ENCODE measurements at regions of chr17 and their contacts with region 1.

Region 1: GRCh38 chr17:19004421-19005136 is at the start of gene FAM83G:
- DNase-seq: peak; percentile 67 to 94 (median 88)
- ATAC-seq: peak; percentile 73
- H3K4me3 ChIP-seq: peak within 1 kb of the TSS; percentile 67
- H3K4me3 Mint-ChIP-seq: peak within 1 kb of the TSS; percentile 97
- H3K27ac ChIP-seq: peak within 1 kb of the TSS; percentile 79 to 85
- H3K27ac Mint-ChIP-seq: peak within 1 kb of the TSS; percentile 83
- H3K4me1 ChIP-seq: peaks cover 55% of the 10 kb centered on the region
- H3K4me1 Mint-ChIP-seq: peaks cover 30% of the 10 kb centered on the region
- H3K27me3 ChIP-seq: no peaks in the 10 kb centered on the region
- H3K27me3 Mint-ChIP-seq: no peaks in the 10 kb centered on the region
- CTCF ChIP-seq: no peak
- total RNA-seq, gene FAM83G: 2.9 to 3.0 TPM

Region 2: GRCh38 chr17:18855831-18856569 is 148.6 kb before region 1 on chr17:
- CTCF ChIA-PET with region 1: no interaction called
- POLR2A ChIA-PET with region 1: interaction called, 6 read pairs
- intact Hi-C with region 1: loop called in 1 of 2 experiments (anchors 5 kb)
- DNase-seq: peak; percentile 74 to 94 (median 82)
- ATAC-seq: peak; percentile 88
- H3K4me3 ChIP-seq: peak overlapping the region; percentile 80
- H3K4me3 Mint-ChIP-seq: peak overlapping the region; percentile 95
- H3K27ac ChIP-seq: peak overlapping the region; percentile 41 to 53
- H3K27ac Mint-ChIP-seq: peak overlapping the region; percentile 89
- H3K4me1 ChIP-seq: peaks cover 52% of the 10 kb centered on the region
- H3K4me1 Mint-ChIP-seq: peaks cover 49% of the 10 kb centered on the region
- H3K27me3 ChIP-seq: no peaks in the 10 kb centered on the region
- H3K27me3 Mint-ChIP-seq: no peaks in the 10 kb centered on the region
- CTCF ChIP-seq: no peak

Region 3: GRCh38 chr17:18904482-18904881 is 100.1 kb before region 1 on chr17:
- CTCF ChIA-PET with region 1: no interaction called
- POLR2A ChIA-PET with region 1: interaction called, 5 read pairs
- intact Hi-C with region 1: loop called in 1 of 2 experiments (anchors 10 kb)
- DNase-seq: no peak
- ATAC-seq: no peak
- H3K4me3 ChIP-seq: no peak overlapping the region
- H3K4me3 Mint-ChIP-seq: no peak overlapping the region
- H3K27ac ChIP-seq: no peak overlapping the region
- H3K27ac Mint-ChIP-seq: no peak overlapping the region
- H3K4me1 ChIP-seq: peaks cover 45% of the 10 kb centered on the region
- H3K4me1 Mint-ChIP-seq: peaks cover 46% of the 10 kb centered on the region
- H3K27me3 ChIP-seq: no peaks in the 10 kb centered on the region
- H3K27me3 Mint-ChIP-seq: no peaks in the 10 kb centered on the region
- CTCF ChIP-seq: no peak

Region 4: GRCh38 chr17:18933102-18934058 is 71.2 kb before region 1 on chr17:
- CTCF ChIA-PET with region 1: no interaction called
- POLR2A ChIA-PET with region 1: no interaction called
- intact Hi-C with region 1: no loop called
- DNase-seq: peak in 2 of 14 experiments; percentile 15 to 38
- ATAC-seq: no peak
- H3K4me3 ChIP-seq: no peak overlapping the region
- H3K4me3 Mint-ChIP-seq: no peak overlapping the region
- H3K27ac ChIP-seq: no peak overlapping the region
- H3K27ac Mint-ChIP-seq: peak overlapping the region; percentile 57
- H3K4me1 ChIP-seq: peaks cover 17% of the 10 kb centered on the region
- H3K4me1 Mint-ChIP-seq: peaks cover 23% of the 10 kb centered on the region
- H3K27me3 ChIP-seq: no peaks in the 10 kb centered on the region
- H3K27me3 Mint-ChIP-seq: no peaks in the 10 kb centered on the region
- CTCF ChIP-seq: no peak

Region 5: GRCh38 chr17:18960803-18961511 is 43.6 kb before region 1 on chr17:
- CTCF ChIA-PET with region 1: interaction called, 6 read pairs
- POLR2A ChIA-PET with region 1: interaction called, 6 read pairs
- intact Hi-C with region 1: loop called in 1 of 2 experiments (anchors 5 kb)
- DNase-seq: peak; percentile 39 to 89 (median 70)
- ATAC-seq: peak; percentile 73
- H3K4me3 ChIP-seq: no peak overlapping the region
- H3K4me3 Mint-ChIP-seq: no peak overlapping the region
- H3K27ac ChIP-seq: no peak overlapping the region
- H3K27ac Mint-ChIP-seq: no peak overlapping the region
- H3K4me1 ChIP-seq: peaks cover 29% of the 10 kb centered on the region
- H3K4me1 Mint-ChIP-seq: peaks cover 23% of the 10 kb centered on the region
- H3K27me3 ChIP-seq: no peaks in the 10 kb centered on the region
- H3K27me3 Mint-ChIP-seq: no peaks in the 10 kb centered on the region
- CTCF ChIP-seq: peak; percentile 98

Region 6: GRCh38 chr17:18966831-18967624 is 37.6 kb before region 1 on chr17:
- CTCF ChIA-PET with region 1: no interaction called
- POLR2A ChIA-PET with region 1: no interaction called
- intact Hi-C with region 1: loop called in 1 of 2 experiments (anchors 5 kb)
- DNase-seq: no peak
- ATAC-seq: no peak
- H3K4me3 ChIP-seq: no peak overlapping the region
- H3K4me3 Mint-ChIP-seq: no peak overlapping the region
- H3K27ac ChIP-seq: no peak overlapping the region
- H3K27ac Mint-ChIP-seq: no peak overlapping the region
- H3K4me1 ChIP-seq: peaks cover 19% of the 10 kb centered on the region
- H3K4me1 Mint-ChIP-seq: peaks cover 14% of the 10 kb centered on the region
- H3K27me3 ChIP-seq: no peaks in the 10 kb centered on the region
- H3K27me3 Mint-ChIP-seq: no peaks in the 10 kb centered on the region
- CTCF ChIP-seq: no peak

Region 7: DNA sequence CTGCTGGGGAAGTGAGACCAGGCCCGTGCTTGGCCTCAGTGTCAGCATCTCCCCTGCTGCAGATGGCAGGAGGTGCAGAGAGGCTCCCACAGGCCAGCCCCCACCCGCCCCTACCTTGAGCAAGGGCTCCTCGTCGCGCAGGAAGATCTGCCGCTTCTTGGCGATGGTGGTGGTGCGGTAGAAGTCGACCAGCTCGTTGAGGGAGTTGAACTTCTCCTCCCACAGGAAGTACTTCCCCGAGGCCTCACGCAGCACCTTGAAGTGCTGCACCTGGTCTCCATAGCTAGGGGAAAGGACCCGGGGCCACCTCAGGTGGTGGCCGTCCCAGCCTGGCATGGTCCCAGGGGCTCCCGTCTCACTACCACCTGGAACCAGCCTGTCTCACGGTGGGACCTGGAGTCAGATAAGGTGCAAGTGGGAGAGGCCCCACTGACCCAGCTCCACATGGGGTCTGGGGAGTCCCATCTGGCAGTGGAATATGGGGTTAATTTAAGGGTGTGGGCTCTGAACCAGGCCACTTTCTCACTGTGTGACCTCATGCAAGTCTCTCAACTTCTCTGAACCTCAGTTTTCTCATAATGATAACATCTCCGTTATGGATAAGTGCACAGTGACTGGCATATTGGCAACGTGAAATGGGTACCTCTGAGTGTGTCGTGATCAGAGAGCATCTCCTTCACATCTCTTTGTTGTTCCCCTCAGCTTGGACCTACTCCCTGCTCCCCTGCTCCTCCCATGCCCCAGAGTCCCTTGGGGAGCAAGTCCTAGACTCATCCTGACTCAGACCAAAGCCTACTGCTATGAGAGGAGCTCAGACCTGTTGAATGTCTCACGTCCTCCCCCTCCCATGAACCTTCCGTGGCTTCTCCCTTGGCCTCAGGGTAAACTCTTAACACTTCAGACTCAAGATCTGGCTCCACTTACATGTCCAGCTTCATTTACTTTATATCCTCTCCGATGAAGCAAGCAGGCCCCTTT is 19.8 kb after region 1 on chr17:
- CTCF ChIA-PET with region 1: interaction called, 3 read pairs
- POLR2A ChIA-PET with region 1: interaction called, 11 read pairs
- intact Hi-C with region 1: loop called in 1 of 2 experiments (anchors 2 kb)
- DNase-seq: peak in 4 of 14 experiments; percentile 28 to 40 (median 34)
- ATAC-seq: peak; percentile 66
- H3K4me3 ChIP-seq: no peak overlapping the region
- H3K4me3 Mint-ChIP-seq: peak overlapping the region; percentile 59
- H3K27ac ChIP-seq: peak overlapping the region; percentile 24 to 40
- H3K27ac Mint-ChIP-seq: peak overlapping the region; percentile 92
- H3K4me1 ChIP-seq: peaks cover 22% of the 10 kb centered on the region
- H3K4me1 Mint-ChIP-seq: peaks cover 22% of the 10 kb centered on the region
- H3K27me3 ChIP-seq: no peaks in the 10 kb centered on the region
- H3K27me3 Mint-ChIP-seq: no peaks in the 10 kb centered on the region
- CTCF ChIP-seq: no peak

Region 8: DNA sequence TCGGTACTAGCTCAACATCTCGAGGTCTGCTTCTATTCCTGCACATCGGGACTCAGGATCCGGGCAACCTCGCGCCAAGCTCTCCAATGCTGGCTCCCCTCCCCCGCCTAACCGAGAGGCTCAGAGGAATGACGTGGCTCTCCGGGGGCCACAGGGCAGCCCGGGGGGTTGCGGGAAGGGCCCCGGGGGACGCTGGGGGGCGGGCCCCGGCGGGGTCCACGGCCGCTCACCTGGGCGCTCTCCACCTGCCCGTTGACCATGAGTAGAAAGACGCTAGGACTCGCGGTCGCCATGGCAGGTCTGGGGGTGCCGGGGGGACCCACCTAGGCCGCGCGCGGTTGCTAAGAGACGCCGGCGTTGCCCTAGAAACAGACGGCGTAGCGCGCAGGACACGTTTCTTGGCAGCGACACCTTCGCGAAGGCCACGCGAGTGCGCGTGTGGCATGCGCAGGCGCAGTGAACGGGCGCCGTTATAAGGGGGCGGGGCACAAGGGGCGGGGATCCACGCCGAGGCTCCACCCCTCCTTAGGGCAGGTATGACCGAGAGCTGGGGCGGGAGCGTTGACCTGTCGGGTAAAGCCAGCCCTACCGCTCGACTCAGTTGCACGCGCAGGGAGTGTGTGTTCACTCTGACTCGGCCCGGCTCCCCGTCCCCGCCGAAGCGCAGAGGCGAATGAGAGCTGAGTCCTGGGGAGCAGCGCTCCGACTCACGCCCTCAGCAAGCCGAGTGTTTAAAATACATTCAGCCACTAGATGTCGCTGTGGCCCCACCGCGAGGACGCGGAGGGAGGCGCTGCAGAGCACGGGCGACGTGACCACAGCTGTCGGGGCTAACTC is 357.9 kb after region 1 on chr17 and contains the start of gene B9D1:
- CTCF ChIA-PET with region 1: no interaction called
- POLR2A ChIA-PET with region 1: no interaction called
- intact Hi-C with region 1: loop called in 1 of 2 experiments (anchors 10 kb)
- DNase-seq: peak; percentile 91 to 97 (median 94)
- ATAC-seq: peak; percentile 93
- H3K4me3 ChIP-seq: peak within 1 kb of the TSS; percentile 75
- H3K4me3 Mint-ChIP-seq: peak within 1 kb of the TSS; percentile 95
- H3K27ac ChIP-seq: peak within 1 kb of the TSS in 1 of 2 donors; percentile 29
- H3K27ac Mint-ChIP-seq: peak within 1 kb of the TSS; percentile 89
- H3K4me1 ChIP-seq: peaks cover 16% of the 10 kb centered on the region
- H3K4me1 Mint-ChIP-seq: peaks cover 14% of the 10 kb centered on the region
- H3K27me3 ChIP-seq: peaks cover 3 to 4% of the 10 kb centered on the region in 2 experiments
- H3K27me3 Mint-ChIP-seq: peaks cover 5% of the 10 kb centered on the region
- CTCF ChIP-seq: peak; percentile 99
- total RNA-seq, gene B9D1: 0.66 to 0.73 TPM

Measured in CD4-positive, alpha-beta T cell (primary cell).